CD8-positive, alpha-beta T cell (primary cell): ENCODE measurements at regions of chr14 and their contacts with region 1.

Region 1: DNA sequence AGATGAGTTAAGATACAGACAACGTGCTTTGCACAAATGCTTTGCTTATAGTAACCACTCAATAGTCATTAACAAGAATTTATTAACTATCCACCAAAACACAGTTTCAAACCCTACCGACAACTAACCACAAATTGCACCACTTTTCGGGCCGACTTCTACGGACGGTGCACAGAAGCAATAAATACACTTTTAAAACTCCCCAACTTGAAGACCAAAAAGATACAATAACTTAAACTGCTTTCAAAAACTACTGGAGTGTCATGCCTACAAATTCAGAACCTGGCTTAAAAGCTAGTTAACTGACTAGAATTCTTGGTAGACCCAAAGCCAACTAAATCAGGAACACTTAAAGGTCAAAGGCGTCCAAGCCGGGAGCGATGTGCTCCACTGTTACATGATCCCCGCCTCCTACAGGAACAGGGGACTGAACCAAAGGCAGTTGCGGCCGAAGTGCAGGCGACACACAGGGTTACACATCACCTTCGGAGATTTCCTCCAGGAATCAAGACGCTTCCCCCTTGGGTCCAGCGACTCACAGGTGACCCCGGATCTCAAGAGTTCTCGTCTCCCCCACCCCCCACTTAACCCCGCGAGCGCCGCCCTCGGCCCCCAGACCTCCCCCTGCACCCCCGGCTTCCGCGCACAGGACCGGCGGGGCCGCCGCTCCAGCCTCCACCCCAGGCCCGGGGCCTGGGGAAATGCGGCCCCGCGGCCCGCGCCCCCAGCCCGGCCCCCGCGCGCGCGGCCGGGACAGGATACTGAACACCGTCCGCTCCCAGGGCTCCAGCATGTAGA is 507 bp downstream of the SPTSSA start:
- DNase-seq: peak in 7 of 9 experiments; percentile 1 to 50 (median 22)
- ATAC-seq: peak; percentile 1
- H3K4me3 ChIP-seq: peak overlapping the region; percentile 51 to 70
- H3K4me3 Mint-ChIP-seq: peak overlapping the region; percentile 87
- H3K27ac ChIP-seq: peak overlapping the region; percentile 53 to 63
- H3K27ac Mint-ChIP-seq: peak overlapping the region; percentile 82
- H3K4me1 ChIP-seq: peaks cover 19% of the 10 kb centered on the region
- H3K4me1 Mint-ChIP-seq: peaks cover 20% of the 10 kb centered on the region
- H3K27me3 ChIP-seq: no peaks in the 10 kb centered on the region
- H3K27me3 Mint-ChIP-seq: no peaks in the 10 kb centered on the region
- CTCF ChIP-seq: no peak

Region 2: DNA sequence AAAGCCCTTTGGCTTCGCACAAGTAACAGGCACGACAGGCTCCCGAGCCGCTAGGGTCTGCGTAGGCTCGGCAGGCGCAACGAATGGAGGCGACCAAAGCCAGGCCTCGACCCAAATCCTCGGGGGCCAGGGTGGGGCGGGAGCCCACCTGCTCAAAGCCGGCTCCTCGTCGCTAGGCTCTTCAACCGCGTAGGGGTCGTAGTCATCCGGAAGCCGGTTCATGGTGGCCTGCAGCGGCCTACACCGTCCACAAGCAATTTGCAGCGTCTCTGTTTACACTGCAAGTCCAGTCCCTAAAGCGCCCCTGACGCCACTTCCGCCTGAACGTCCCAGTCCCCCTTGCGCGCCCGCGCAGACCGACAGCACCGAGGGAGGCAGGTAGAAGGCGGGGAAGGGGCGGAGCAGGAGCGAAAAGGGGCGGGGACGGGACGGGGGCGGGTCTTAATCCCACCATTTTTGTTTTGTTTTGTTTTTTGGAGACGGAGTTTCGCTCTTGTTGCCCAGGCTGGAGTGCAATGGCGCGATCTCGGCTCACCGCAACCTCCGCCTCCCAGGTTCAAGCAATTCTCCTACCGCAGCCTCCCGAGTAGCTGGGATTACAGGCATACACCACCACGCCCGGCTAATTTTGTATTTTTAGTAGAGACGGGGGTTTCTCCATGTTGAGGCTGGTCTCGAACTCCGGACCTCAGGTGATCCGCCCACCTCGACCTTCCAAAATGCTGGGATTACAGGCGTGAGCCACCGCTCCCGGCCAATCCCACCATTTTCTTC is 78.1 kb after region 1 on chr14 and contains the start of gene EAPP:
- CTCF ChIA-PET with region 1: no interaction called
- POLR2A ChIA-PET with region 1: no interaction called
- intact Hi-C with region 1: loop called (anchors 5 kb)
- DNase-seq: peak; percentile 88 to 97 (median 95)
- ATAC-seq: peak; percentile 98
- H3K4me3 ChIP-seq: peak within 1 kb of the TSS; percentile 94 to 95
- H3K4me3 Mint-ChIP-seq: peak within 1 kb of the TSS; percentile 97
- H3K27ac ChIP-seq: peak within 1 kb of the TSS; percentile 96 to 97
- H3K27ac Mint-ChIP-seq: peak within 1 kb of the TSS; percentile 98
- H3K4me1 ChIP-seq: peaks cover 16% of the 10 kb centered on the region
- H3K4me1 Mint-ChIP-seq: peaks cover 34% of the 10 kb centered on the region
- H3K27me3 ChIP-seq: no peaks in the 10 kb centered on the region
- H3K27me3 Mint-ChIP-seq: no peaks in the 10 kb centered on the region
- CTCF ChIP-seq: no peak
- total RNA-seq, gene EAPP: 91.0 to 91.4 TPM

Region 3: GRCh38 chr14:34629657-34630529 is 168.4 kb after region 1 on chr14 and contains the start of gene SNX6:
- CTCF ChIA-PET with region 1: no interaction called
- POLR2A ChIA-PET with region 1: no interaction called
- intact Hi-C with region 1: loop called in 1 of 2 experiments (anchors 5 kb)
- DNase-seq: peak; percentile 70 to 92 (median 83)
- ATAC-seq: peak; percentile 96
- H3K4me3 ChIP-seq: peak within 1 kb of the TSS; percentile 95 to 100
- H3K4me3 Mint-ChIP-seq: peak within 1 kb of the TSS; percentile 94
- H3K27ac ChIP-seq: peak within 1 kb of the TSS; percentile 91 to 96
- H3K27ac Mint-ChIP-seq: peak within 1 kb of the TSS; percentile 93
- H3K4me1 ChIP-seq: peaks cover 20% of the 10 kb centered on the region
- H3K4me1 Mint-ChIP-seq: peaks cover 37% of the 10 kb centered on the region
- H3K27me3 ChIP-seq: no peaks in the 10 kb centered on the region
- H3K27me3 Mint-ChIP-seq: peaks cover 4% of the 10 kb centered on the region
- CTCF ChIP-seq: no peak
- total RNA-seq, gene SNX6: 51.2 to 53.5 TPM

Region 4: DNA sequence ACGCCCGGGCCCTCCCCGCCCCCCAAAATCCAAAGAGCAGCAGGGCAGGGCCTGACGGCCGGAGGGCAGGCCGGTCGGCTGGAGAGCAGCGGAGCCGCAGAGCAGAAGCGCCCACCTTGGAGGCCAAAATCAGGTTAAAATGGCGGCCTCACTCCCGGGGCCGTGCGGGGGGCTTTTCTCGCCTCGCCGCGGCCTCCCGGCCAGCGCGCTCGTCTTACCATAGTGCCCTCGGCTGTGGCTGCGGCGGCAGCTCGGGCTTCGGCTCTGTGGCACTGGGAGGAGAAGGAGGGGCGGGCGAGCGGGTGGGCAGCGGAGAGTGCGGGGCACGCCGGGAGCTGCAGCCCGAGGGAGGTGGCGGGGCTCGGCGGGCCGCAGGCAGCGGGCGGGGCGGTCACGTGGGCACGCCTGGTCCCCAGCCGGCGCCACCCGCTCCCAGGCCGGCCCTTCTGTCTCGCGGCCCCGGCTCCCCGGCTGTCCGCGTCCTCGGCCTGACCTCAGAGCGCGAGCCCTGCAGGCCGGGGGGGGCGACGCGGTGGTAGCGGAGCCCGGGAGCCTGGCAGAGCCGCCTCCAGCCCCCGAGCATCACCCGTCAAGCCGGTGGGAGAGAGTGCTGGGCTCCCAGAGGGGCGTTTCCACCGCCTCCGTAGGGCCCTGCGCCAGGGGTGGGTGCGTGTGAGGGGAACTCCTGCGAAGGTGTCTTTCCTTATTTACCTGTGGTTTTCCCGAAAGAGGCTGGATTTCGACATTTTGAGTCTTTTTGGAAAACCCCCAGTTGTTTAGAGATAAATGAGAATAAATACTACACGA is 253.0 kb after region 1 on chr14 and contains the start of gene CFL2:
- CTCF ChIA-PET with region 1: no interaction called
- POLR2A ChIA-PET with region 1: interaction called, 4 read pairs
- intact Hi-C with region 1: loop called in 1 of 2 experiments (anchors 2 kb)
- DNase-seq: peak; percentile 35 to 92 (median 72)
- ATAC-seq: peak; percentile 86
- H3K4me3 ChIP-seq: peak within 1 kb of the TSS; percentile 72 to 78
- H3K4me3 Mint-ChIP-seq: peak within 1 kb of the TSS; percentile 92
- H3K27ac ChIP-seq: peak within 1 kb of the TSS; percentile 45 to 51
- H3K27ac Mint-ChIP-seq: peak within 1 kb of the TSS; percentile 90
- H3K4me1 ChIP-seq: peaks cover 13% of the 10 kb centered on the region
- H3K4me1 Mint-ChIP-seq: peaks cover 33% of the 10 kb centered on the region
- H3K27me3 ChIP-seq: no peaks in the 10 kb centered on the region
- H3K27me3 Mint-ChIP-seq: peaks cover 2% of the 10 kb centered on the region
- CTCF ChIP-seq: no peak
- total RNA-seq, gene CFL2: 35.1 to 35.4 TPM

Region 5: DNA sequence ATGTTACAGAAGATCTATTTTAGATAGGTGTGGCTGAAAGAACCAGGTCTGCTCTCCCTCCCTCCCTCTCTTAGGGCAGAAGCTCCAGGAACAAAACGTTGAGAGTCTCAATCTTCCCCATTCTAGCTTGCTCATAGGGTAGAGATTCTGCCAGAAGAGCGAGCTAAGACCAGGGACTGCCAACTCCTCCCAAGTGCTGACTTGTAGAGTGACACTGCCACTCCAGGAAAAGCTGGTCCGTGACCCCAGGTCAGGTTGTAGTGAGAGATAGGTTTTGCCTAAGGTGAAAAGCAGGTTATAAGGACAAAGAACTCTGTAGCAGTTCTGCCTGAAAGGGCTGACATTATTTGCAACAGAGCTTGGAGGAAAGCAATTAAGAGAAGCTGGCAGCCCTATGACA is 1145.9 kb after region 1 on chr14:
- CTCF ChIA-PET with region 1: no interaction called
- POLR2A ChIA-PET with region 1: no interaction called
- intact Hi-C with region 1: no loop called
- DNase-seq: no peak
- ATAC-seq: no peak
- H3K4me3 ChIP-seq: no peak overlapping the region
- H3K4me3 Mint-ChIP-seq: no peak overlapping the region
- H3K27ac ChIP-seq: no peak overlapping the region
- H3K27ac Mint-ChIP-seq: no peak overlapping the region
- H3K4me1 ChIP-seq: no peaks in the 10 kb centered on the region
- H3K4me1 Mint-ChIP-seq: peaks cover 1% of the 10 kb centered on the region
- H3K27me3 ChIP-seq: no peaks in the 10 kb centered on the region
- H3K27me3 Mint-ChIP-seq: no peaks in the 10 kb centered on the region
- CTCF ChIP-seq: no peak

Region 6: DNA sequence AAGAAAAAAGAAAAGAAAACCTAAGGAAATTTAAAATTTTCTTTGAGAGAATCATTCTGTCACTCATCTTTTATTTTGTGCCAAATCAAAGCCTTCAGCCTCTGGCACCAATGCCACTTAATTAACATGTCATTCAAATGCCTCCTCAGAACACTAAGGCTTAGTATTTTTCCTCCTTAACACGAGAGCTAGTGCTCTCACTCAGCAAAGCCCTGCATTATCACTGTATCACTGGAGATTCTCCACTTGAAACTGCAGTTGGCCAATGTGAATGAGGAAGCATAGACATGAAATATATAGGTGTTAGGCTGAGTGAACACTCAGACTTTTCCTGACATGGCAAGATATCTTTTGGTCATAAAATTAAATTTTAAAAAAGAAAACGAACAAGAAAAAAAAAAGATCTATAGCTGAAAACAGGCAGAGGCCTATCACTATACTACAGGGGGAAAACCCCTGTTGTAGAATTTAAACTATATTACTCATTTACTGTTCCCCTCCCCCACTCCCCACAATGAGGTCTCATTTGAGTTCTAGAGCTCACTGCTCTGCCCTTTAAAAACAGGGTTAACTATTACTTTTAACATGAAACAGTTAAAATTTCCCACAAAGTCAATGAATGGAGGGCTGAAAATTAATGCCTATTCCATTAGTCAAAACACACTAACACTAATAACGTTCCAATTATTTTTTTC is 1853.8 kb after region 1 on chr14:
- CTCF ChIA-PET with region 1: no interaction called
- POLR2A ChIA-PET with region 1: no interaction called
- intact Hi-C with region 1: loop called (anchors 5 to 10 kb)
- DNase-seq: peak in 2 of 9 experiments; percentile 5 to 15
- ATAC-seq: no peak
- H3K4me3 ChIP-seq: no peak overlapping the region
- H3K4me3 Mint-ChIP-seq: no peak overlapping the region
- H3K27ac ChIP-seq: no peak overlapping the region
- H3K27ac Mint-ChIP-seq: no peak overlapping the region
- H3K4me1 ChIP-seq: peaks cover 12% of the 10 kb centered on the region
- H3K4me1 Mint-ChIP-seq: peaks cover 37% of the 10 kb centered on the region
- H3K27me3 ChIP-seq: no peaks in the 10 kb centered on the region
- H3K27me3 Mint-ChIP-seq: no peaks in the 10 kb centered on the region
- CTCF ChIP-seq: no peak

Region 7: DNA sequence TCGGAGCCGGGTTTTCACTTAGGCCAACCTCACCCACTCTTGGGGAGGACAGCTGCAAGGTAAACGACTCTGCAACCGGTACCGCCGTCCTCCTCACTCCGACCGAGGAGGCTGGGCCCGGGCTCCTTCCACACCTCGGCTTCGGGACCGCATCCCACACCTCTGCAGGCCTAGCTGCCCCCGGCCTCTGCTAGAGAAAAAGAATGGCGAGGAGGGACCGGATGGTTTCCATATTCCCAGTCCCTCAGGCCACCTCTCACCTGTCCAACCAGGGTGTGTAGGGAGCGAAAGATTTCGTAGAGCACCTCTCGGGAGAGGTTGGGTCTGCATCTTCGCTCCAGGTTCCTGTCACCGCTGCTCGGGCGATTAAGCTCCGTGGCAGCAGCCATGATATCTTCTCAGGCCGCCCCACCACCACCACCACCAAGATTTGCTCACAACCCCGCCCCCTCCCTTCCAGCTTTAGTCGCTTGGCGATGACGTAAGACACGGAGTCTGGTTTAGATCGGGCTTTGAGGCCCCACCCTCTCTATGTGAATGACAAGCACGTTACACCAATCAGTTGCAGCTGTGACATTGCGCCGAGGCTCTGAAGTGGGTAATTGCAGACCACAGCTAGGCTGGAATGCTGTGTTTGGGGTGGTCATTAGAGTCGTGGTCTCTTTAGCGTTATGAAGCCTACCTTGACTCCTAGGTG is 1858.8 kb after region 1 on chr14 and contains the start of gene MBIP:
- CTCF ChIA-PET with region 1: no interaction called
- POLR2A ChIA-PET with region 1: no interaction called
- intact Hi-C with region 1: loop called (anchors 5 to 10 kb)
- DNase-seq: peak; percentile 79 to 97 (median 89)
- ATAC-seq: peak; percentile 96
- H3K4me3 ChIP-seq: peak within 1 kb of the TSS; percentile 86 to 91
- H3K4me3 Mint-ChIP-seq: peak within 1 kb of the TSS; percentile 98
- H3K27ac ChIP-seq: peak within 1 kb of the TSS; percentile 63 to 74
- H3K27ac Mint-ChIP-seq: peak within 1 kb of the TSS; percentile 97
- H3K4me1 ChIP-seq: peaks cover 16% of the 10 kb centered on the region
- H3K4me1 Mint-ChIP-seq: peaks cover 41% of the 10 kb centered on the region
- H3K27me3 ChIP-seq: no peaks in the 10 kb centered on the region
- H3K27me3 Mint-ChIP-seq: peaks cover 5% of the 10 kb centered on the region
- CTCF ChIP-seq: no peak
- total RNA-seq, gene MBIP: 57.4 to 58.1 TPM